Activated CD4-positive, alpha-beta memory T cell treated with anti-CD3 and anti-CD28 coated beads, Interleukin-2, amount 10 ng/mL, durations not matched to agents 7 days and 5 days (primary cell): ENCODE measurements at regions of chr17 and their contacts with region 1.

Region 1: GRCh38 chr17:78013683-78014467 is 55.4 kb downstream of the TNRC6C start:
- DNase-seq: peak; percentile 56
- H3K4me3 Mint-ChIP-seq: no peak overlapping the region
- H3K27ac Mint-ChIP-seq: no peak overlapping the region
- H3K4me1 Mint-ChIP-seq: peaks cover 9% of the 10 kb centered on the region
- H3K27me3 Mint-ChIP-seq: no peaks in the 10 kb centered on the region

Region 2: GRCh38 chr17:77542551-77543490 is 471.1 kb before region 1 on chr17:
- CTCF ChIA-PET with region 1: interaction called, 33 read pairs
- POLR2A ChIA-PET with region 1: no interaction called
- DNase-seq: peak; percentile 71
- H3K4me3 Mint-ChIP-seq: no peak overlapping the region
- H3K27ac Mint-ChIP-seq: no peak overlapping the region
- H3K4me1 Mint-ChIP-seq: peaks cover 4% of the 10 kb centered on the region
- H3K27me3 Mint-ChIP-seq: peaks cover 27% of the 10 kb centered on the region

Region 3: GRCh38 chr17:77772461-77772897 is 241.4 kb before region 1 on chr17:
- CTCF ChIA-PET with region 1: interaction called, 32 read pairs
- POLR2A ChIA-PET with region 1: no interaction called
- DNase-seq: peak; percentile 70
- H3K4me3 Mint-ChIP-seq: no peak overlapping the region
- H3K27ac Mint-ChIP-seq: no peak overlapping the region
- H3K4me1 Mint-ChIP-seq: peaks cover 8% of the 10 kb centered on the region
- H3K27me3 Mint-ChIP-seq: peaks cover 6% of the 10 kb centered on the region